Mammary epithelial cell (primary cell): ENCODE measurements at regions of chr6 and their contacts with region 1.

Region 1: DNA sequence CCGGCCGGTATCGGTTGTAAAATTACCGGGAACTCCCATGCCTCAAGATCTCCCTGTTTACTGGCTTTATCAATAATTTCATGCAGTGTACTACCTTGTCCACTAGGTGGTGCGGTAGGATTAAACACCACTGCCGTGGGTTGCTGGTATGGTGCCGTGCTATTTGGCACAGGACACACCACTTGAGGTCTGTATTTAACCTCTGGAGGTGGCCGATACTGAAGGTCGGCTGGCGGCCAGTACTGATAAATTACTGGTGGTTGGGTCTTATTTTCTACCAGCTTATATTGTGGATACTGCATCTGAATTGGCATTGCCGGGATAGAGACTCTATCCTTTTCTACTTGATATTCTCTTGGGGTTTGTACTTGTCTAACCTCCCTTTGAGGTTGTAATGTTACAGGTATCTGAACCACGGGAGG is 14.3 kb upstream of the PTCRA start:
- DNase-seq: peak; percentile 85
- H3K4me3 ChIP-seq: peak overlapping the region; percentile 8 to 16 (median 12)
- H3K27ac ChIP-seq: peak overlapping the region; percentile 9
- H3K4me1 ChIP-seq: peaks cover 8% of the 10 kb centered on the region
- H3K27me3 ChIP-seq: no peaks in the 10 kb centered on the region
- CTCF ChIP-seq: peak; percentile 74

Region 2: DNA sequence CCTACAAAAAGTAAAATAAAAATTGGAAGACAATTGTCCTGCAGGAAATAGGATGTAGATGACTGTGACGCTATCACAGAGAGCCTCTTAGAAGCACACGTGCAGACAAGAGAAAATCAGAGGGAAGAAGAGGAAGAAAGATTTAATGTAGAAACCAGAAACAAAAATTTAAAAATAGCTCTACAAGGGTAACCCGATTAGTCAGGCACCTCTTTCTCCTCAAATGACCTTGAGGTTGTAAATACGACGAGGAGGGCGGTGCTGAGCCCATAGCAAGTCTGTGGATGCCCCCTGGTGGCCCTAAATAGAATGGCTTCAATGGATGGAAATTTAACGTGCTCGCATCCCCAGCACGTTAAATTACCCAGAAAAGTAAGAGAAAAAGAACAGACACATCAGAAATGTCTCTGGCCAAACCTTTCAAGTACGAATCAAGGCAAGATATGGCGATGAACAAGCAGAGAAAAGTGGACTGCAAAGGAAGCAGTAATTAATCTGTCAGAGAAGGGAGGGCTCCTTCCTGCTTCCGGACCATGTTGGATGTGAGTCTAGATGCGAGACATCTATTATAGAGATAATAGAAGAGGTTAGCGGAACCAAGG is 175.0 kb before region 1 on chr6:
- CTCF ChIA-PET with region 1: no interaction called
- dilution Hi-C with region 1: no loop called
- in situ Hi-C with region 1: no loop called
- intact Hi-C with region 1: loop called (anchors 1 kb)
- DNase-seq: peak; percentile 64
- H3K4me3 ChIP-seq: peak overlapping the region; percentile 33 to 45 (median 39)
- H3K27ac ChIP-seq: no peak overlapping the region
- H3K4me1 ChIP-seq: peaks cover 13% of the 10 kb centered on the region
- H3K27me3 ChIP-seq: no peaks in the 10 kb centered on the region
- CTCF ChIP-seq: peak; percentile 81 to 88

Region 3: DNA sequence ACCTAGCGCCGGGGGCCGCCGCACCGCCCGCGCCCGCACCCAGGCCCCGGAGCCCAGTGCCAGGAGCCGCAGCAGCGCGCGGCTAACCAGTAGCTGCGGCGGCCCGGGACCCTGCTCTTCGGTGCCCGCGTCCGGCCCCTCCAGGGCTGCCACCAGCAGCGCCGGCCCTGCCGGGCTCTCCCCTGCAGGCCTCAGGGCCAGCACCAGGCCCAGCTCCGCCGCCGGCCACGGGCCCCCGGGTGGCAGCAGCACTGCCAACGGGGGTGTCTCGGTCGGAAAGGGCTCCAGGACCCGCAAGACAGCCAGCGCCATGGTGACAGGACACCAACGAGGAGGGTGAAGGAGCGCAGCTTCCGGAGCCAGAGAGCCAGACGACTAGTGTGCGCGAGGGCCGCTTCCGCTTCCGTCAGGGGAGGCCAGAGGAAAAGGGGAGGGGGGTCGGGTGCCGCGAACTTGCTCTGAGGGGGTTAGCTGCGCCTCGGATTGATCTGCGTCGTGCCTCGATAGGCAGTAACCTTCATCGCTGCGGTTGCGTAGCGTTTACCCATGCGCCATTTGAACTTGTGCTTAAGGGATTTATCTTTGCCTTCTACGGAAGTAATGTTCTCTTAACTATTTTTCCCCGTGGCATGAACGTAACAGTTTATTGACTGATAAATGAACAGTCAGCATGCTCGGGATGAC is 77.4 kb after region 1 on chr6 and contains the start of gene PEX6:
- CTCF ChIA-PET with region 1: no interaction called
- dilution Hi-C with region 1: no loop called
- in situ Hi-C with region 1: no loop called
- intact Hi-C with region 1: loop called (anchors 1 kb)
- DNase-seq: peak; percentile 79
- H3K4me3 ChIP-seq: peak within 1 kb of the TSS; percentile 47 to 82 (median 58)
- H3K27ac ChIP-seq: peak within 1 kb of the TSS; percentile 63
- H3K4me1 ChIP-seq: peaks cover 30% of the 10 kb centered on the region
- H3K27me3 ChIP-seq: no peaks in the 10 kb centered on the region
- CTCF ChIP-seq: no peak
- total RNA-seq, gene PEX6: 12.9 to 22.2 TPM

Region 4: DNA sequence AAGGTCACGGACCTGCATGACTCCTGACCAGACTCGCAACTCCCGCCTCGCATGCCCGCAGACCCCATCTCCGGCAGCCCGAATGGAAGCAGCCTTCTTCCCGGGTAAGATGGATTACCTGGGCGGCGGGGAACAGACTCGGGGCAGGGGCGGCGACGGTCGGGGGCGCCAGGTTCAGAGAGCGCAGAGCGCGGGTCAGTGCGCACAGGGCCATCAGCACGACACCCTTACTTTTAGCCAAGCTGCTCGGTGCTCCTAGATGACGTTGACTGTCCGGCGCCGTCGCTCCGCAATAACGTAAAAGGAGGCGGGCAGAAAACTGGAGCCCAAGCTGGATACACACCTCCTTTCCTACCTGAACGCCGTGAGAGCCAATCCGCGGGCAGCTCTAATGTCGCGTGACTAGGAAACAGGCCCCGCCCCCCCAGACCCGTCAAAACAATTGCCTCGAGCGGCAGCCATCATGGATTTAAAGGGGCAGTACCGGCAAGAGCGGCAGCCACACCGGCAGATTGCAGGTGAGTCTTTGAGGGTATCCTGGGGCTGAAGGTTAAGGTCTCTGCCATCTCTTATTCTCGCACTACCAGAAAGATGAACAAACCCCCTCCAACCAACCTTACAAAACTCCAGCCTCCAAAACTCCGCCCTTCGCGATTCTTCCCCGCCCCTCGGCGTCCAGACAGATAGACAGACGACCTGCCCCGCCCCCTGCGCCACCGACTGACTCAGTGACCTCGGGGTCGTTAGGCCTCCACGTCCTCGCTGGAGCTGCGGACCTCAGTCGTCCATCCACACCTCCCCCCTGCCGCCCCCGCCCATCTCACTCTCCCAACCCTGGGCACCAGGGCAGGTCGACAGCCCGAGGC is 157.9 kb after region 1 on chr6 and contains the starts of genes KLC4 and MRPL2:
- CTCF ChIA-PET with region 1: no interaction called
- dilution Hi-C with region 1: no loop called
- in situ Hi-C with region 1: no loop called
- intact Hi-C with region 1: loop called (anchors 2 kb)
- DNase-seq: peak; percentile 98
- H3K4me3 ChIP-seq: peak within 1 kb of the TSS; percentile 86 to 95 (median 89)
- H3K27ac ChIP-seq: peak within 1 kb of the TSS; percentile 80
- H3K4me1 ChIP-seq: peaks cover 21% of the 10 kb centered on the region
- H3K27me3 ChIP-seq: no peaks in the 10 kb centered on the region
- CTCF ChIP-seq: no peak
- total RNA-seq, gene KLC4: 17.5 to 20.2 TPM
- total RNA-seq, gene MRPL2: 13.3 to 75.2 TPM

Region 5: DNA sequence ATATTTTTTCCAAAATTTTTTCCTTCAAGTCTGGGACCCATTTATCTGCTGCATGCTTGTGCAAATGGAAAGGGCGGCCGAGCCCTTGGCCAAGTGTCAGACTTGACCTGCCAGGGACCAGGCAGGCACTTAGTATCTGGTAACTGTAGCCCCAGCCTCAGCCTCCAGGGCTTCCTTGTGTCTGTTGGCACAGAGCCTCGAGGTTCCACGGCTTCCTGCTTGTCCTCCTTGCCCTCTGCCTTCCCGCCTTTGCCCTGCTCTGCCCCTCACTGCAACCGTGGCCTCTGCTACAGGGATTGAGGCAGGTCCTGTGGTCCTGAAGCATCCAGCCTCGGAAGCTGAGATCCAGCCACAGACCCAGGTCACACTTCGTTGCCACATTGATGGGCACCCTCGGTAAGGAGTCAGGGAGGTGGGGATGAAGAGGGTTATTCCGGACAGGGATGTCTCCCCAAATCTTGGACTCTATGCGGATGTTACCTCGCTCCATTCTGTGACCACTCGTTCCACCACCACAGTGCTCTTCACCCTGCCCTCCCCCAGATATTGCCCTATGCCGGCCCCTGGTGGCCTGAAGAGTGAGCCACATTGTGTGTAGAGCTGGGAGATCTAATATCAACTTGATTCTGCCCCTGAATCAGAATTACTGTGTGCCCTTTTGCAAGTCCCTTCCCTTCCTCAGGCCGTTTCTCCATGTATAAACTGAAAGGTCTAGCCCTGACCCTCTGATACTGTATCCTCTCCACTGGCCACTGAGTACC is 228.1 kb after region 1 on chr6:
- CTCF ChIA-PET with region 1: no interaction called
- dilution Hi-C with region 1: no loop called
- in situ Hi-C with region 1: loop called in 1 of 2 experiments (anchors 10 kb)
- intact Hi-C with region 1: no loop called
- DNase-seq: peak; percentile 46
- H3K4me3 ChIP-seq: no peak overlapping the region
- H3K27ac ChIP-seq: no peak overlapping the region
- H3K4me1 ChIP-seq: peaks cover 30% of the 10 kb centered on the region
- H3K27me3 ChIP-seq: no peaks in the 10 kb centered on the region
- CTCF ChIP-seq: peak; percentile 49 to 78

Region 6: GRCh38 chr6:43263314-43264178 is 362.0 kb after region 1 on chr6:
- CTCF ChIA-PET with region 1: interaction called, 3 read pairs
- dilution Hi-C with region 1: no loop called
- in situ Hi-C with region 1: no loop called
- intact Hi-C with region 1: loop called (anchors 2 kb)
- DNase-seq: peak; percentile 51
- H3K4me3 ChIP-seq: no peak overlapping the region
- H3K27ac ChIP-seq: no peak overlapping the region
- H3K4me1 ChIP-seq: no peaks in the 10 kb centered on the region
- H3K27me3 ChIP-seq: no peaks in the 10 kb centered on the region
- CTCF ChIP-seq: peak; percentile 87 to 91

Region 7: DNA sequence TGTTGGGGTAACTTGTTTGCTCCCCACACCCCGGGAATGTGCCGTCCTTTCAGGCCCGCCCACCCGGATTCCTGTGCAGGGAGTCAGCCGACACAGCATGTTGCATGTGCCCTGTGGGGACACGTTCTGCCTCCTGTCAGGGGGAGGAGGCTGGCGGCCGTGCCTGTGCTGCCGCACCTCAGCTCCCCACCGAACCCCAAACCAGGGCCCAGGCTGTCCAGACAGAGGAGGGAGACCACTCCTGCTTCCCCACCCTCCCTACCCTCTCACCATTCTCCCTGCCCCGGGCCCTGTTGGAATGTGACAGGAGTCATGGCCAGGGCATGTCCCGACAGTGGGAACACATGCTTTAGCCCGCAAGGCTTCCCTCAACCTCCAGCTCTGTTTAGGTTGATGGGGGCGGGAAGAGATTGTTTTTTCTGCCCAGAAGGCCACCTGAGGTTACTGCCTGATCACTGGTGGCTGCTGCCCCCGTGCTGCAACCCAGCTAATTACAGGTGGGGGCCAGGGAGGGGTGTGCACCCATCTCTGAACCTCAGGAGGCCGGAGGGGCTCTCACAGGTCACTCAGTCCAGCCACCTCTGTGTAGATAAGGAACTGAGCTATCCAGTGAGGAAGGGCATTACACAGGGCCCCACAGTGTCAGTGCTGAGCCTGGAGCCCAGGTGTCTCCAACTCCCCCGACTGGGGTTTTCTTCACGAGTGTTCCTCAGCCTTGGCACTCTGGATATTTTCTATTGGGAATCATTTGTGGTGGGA is 595.0 kb after region 1 on chr6:
- CTCF ChIA-PET with region 1: no interaction called
- dilution Hi-C with region 1: no loop called
- in situ Hi-C with region 1: no loop called
- intact Hi-C with region 1: loop called (anchors 1 kb)
- DNase-seq: peak; percentile 94
- H3K4me3 ChIP-seq: peak overlapping the region in 2 of 3 experiments; percentile 11 to 22
- H3K27ac ChIP-seq: peak overlapping the region; percentile 78
- H3K4me1 ChIP-seq: peaks cover 58% of the 10 kb centered on the region
- H3K27me3 ChIP-seq: no peaks in the 10 kb centered on the region
- CTCF ChIP-seq: peak; percentile 82 to 89